GM10248 (cell line): ENCODE measurements at regions of chr12 and their contacts with region 1.

Region 1: DNA sequence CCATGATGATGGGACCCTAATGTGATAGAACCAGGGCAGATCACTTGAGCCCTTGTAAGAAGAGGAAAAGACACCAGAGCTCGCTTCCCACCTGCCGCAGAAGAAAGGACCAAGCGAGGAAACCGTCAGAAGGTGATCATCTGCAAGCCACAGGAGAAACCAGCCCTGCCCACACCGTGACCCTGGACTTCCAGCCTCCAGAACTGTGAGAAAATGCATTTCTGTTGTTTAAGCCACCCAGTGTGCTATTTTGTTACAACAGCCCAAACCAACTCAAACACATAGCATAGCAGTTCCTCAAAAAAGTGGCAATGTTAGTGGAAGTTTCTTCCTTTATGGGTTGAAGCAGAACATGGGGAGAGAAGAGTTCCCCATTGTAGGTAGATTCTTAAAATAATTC is 107.9 kb upstream of the BCL2L14 start:
- DNase-seq: no peak
- CTCF ChIP-seq: no peak

Region 2: DNA sequence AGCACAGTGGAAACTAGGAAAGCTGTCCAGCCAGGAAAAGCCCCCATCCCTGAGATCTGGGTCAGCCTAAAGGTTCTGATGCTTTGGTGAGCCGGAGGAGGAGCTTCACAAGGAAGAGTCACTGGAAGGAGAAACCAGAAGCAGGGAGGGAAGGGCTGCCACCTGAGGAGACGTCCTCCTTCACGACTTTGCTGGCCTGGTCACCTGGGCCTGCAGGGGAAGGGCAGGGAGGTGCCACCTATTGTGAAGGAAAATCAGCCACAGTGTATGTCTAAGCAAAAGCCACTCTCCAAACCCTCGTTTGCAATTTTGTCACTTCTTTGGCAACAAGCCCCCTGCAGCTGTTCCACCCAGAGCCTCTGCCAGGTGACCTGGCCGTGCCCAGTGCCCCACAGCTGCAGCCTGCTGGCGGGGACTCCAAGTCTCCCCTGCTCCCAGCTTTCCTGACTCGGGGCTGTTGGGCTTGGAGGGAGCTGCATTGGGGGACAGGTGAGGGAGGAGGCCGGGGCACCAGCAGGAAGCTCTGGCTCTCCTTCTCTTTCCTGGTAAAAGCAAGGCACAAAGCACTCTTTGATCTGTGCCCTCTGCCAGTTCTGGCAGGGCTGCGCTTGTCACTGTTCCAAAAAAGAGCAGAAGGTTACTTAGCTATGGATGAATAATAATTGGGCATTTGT is 13.0 kb before region 1 on chr12:
- CTCF ChIA-PET with region 1: interaction called, 11 read pairs
- POLR2A ChIA-PET with region 1: interaction called, 5 read pairs
- DNase-seq: no peak
- CTCF ChIP-seq: no peak

Region 3: GRCh38 chr12:11998944-11999315 is 36.1 kb after region 1 on chr12:
- CTCF ChIA-PET with region 1: no interaction called
- POLR2A ChIA-PET with region 1: no interaction called
- DNase-seq: no peak
- CTCF ChIP-seq: no peak

Region 4: GRCh38 chr12:12024911-12025682 is 62.2 kb after region 1 on chr12:
- CTCF ChIA-PET with region 1: no interaction called
- POLR2A ChIA-PET with region 1: no interaction called
- DNase-seq: peak; percentile 55
- CTCF ChIP-seq: no peak